Sciatic nerve (tissue), 2 donors: ENCODE measurements at regions of chr6 and their contacts with region 1.

Region 1: GRCh38 chr6:105872246-105872645 is 213.9 kb upstream of the PRDM1 start:
- DNase-seq: no peak
- ATAC-seq: peak; percentile 77

Region 2: GRCh38 chr6:104653781-104654180 is 1218.5 kb before region 1 on chr6:
- intact Hi-C with region 1: no loop called
- DNase-seq: no peak
- ATAC-seq: no peak

Region 3: DNA sequence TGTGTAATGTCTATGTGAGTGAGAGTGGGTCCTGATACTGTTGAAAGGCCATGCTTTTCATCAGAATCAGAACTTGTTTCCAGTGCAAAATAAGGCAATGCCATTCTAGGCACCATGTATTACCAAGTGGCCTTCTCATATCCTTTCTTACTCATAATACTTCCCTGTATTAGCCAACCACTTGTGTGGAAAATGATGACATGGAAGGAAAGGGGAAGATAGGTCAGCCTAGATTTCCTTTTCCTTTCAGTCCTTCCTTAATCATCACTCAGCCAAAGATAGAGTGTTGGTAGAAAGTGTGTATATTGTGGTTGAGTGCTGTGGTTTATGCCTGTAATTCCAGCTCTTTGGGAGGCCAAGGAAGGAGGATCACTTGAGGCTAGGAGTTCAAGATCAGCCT is 310.8 kb before region 1 on chr6:
- intact Hi-C with region 1: no loop called
- DNase-seq: no peak
- ATAC-seq: no peak

Region 4: GRCh38 chr6:106866875-106867658 is 994.8 kb after region 1 on chr6:
- intact Hi-C with region 1: loop called (anchors 5 kb)
- DNase-seq: no peak
- ATAC-seq: no peak